Right lobe of liver (tissue), 6 donors: ENCODE measurements at regions of chr12 and their contacts with region 1.

Region 1: DNA sequence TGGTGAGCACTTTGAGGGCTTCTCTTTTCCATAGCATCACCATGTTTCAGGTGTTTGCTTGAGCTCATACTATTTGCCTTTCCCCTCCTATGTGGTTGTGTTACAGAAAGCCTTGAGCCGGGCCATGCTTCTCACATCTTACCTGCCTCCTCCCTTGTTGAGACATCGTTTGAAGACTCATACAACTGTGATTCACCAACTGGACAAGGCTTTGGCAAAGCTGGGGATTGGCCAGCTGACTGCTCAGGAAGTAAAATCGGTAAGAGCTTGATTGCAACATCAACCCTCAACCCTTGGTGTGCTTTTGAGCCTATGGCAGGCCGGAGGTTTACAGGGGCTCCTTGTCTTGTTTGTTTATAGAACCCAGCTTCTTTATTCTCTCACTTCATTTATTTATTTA is 8.1 kb downstream of the LETMD1 start:
- DNase-seq: peak in 1 of 3 donors; percentile 28
- ATAC-seq: peak in 3 of 4 donors; percentile 24 to 67 (median 29)
- H3K4me3 ChIP-seq: no peak overlapping the region
- H3K27ac ChIP-seq: no peak overlapping the region
- H3K4me1 ChIP-seq: no peaks in the 10 kb centered on the region
- H3K27me3 ChIP-seq: no peaks in the 10 kb centered on the region
- CTCF ChIP-seq: no peak
- POLR2A ChIP-seq: no peak

Region 2: DNA sequence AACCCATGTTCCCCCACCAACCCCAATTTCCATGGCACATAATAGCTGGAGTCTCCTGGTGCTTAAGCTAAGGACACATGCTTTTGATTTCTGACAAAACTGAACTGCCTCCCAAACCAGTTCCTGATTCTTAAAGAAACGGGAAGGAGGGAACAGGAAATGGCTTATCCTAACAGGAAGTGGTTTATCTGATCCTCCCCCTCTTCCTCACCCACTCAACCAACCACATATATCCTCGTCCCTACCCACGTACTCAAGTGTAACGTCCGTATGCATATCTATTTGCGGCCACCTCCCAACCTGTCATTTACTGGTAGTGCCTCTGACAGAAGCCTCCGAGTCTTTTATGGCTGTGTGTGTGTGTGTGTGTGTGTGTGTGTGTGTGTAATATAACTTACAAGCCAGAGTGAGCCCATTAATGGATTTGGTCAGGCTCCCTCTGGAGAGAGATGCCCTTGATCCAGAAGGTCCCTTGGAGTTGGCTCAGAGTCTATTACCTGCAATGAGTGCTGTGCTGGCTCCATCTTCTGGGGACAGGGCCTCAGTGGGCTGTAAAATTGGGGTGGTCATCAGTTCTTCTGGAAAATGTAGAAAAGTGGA is 190.1 kb after region 1 on chr12:
- intact Hi-C with region 1: loop called in 1 of 2 experiments (anchors 10 kb)
- DNase-seq: no peak
- ATAC-seq: peak; percentile 61 to 80 (median 72)
- H3K4me3 ChIP-seq: no peak overlapping the region
- H3K27ac ChIP-seq: peak overlapping the region in 1 of 3 donors; percentile 29
- H3K4me1 ChIP-seq: peaks cover 0 to 9% (median 0%) of the 10 kb centered on the region in 4 donors
- H3K27me3 ChIP-seq: no peaks in the 10 kb centered on the region
- CTCF ChIP-seq: peak in 2 of 4 donors; percentile 5 to 21
- POLR2A ChIP-seq: peak; percentile 33